ENCODE measurements at regions of chr1 and their contacts with region 1.

Region 1: DNA sequence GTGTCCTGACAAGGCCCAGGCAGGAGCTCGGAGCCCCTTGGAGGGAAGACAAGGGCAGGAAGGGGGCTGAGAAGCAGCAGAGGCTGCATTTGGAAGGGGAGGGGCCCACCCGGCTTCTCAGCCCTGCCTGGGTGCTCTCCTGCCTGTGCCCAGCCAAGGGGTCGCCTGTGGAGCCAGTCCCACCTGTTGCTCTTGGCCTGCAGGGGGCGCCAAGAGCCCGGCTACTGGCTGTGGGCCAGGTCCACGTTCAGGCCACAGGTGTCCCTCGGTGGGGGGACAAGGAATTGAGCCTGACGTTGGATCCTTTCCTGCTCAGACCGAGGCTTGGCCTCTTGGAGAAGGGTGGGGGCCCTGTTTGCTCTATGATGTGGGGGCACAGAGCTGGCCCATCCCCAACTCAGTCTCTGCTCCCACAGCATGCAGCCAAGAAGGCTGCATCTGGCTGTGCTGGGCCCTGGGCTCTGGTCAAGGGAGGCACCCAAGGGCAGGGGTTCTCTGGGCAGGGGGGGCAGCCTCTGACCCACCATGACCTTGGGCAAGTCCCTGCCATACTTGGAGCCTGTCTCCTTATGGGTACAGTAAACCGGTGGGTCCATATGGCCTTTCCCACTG is 10.9 kb downstream of the WNT4 start:
- DNase-seq: peak in 8 of 9 experiments; percentile 30 to 72 (median 58)
- ATAC-seq: peak; percentile 38
- H3K4me3 ChIP-seq: no peak overlapping the region
- H3K4me3 Mint-ChIP-seq: no peak overlapping the region
- H3K27ac ChIP-seq: no peak overlapping the region
- H3K27ac Mint-ChIP-seq: no peak overlapping the region
- H3K4me1 ChIP-seq: no peaks in the 10 kb centered on the region
- H3K4me1 Mint-ChIP-seq: no peaks in the 10 kb centered on the region
- H3K27me3 ChIP-seq: no peaks in the 10 kb centered on the region
- H3K27me3 Mint-ChIP-seq: peaks cover 2% of the 10 kb centered on the region
- CTCF ChIP-seq: peak; percentile 52

Region 2: DNA sequence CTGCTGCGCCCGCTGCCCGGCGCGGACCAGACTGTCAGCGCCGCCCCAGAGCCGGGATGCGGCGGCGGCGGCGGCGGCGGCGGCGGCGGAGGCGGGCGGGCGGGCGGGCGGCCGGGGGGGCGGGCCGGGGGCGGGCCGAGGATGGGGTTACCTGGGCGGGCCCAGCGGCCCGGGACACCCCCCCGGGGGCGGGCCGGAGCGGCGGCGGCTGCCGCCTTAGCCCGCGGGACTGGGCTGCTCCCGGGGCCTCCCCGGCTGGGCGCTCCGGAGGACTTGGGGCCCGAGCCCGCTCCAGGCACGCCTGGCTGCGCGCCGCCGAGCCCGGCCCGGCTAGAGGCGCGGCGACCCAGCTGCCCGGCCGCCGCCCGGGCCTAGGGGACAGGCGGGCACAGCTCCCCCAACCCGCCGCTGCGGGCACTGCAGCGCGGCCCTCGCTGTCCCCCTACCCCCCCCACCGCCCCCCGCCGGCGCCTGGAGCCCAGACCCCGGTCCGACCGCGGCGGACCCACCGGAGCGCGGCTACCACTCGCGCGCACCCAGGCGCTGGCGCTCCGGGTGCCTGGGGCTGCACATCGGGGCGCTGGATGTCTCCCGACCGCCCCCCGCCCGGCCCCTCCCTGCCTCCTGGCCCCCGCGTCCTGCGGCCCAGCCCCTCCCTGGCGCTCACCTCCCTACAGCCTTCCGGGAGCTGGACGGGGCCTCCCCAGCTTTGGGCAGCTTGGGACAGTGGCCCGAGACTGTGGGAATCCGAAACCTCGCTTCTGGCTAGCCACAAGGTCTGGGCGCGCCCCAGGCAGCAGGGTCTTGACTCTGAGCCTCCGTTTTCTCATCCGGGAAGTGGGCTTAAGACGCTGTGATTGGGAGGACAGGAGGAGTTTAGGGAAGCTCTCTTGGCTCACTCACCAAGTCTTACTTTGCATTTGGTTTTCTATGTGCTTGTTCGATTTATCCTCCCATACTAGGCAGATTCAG is 11.4 kb after region 1 on chr1 and contains the start of gene WNT4:
- CTCF ChIA-PET with region 1: interaction called, 12 read pairs
- POLR2A ChIA-PET with region 1: no interaction called
- intact Hi-C with region 1: no loop called
- DNase-seq: peak in 4 of 9 experiments; percentile 4 to 60 (median 45)
- ATAC-seq: peak; percentile 79
- H3K4me3 ChIP-seq: peak within 1 kb of the TSS in 1 of 2 experiments; percentile 30
- H3K4me3 Mint-ChIP-seq: peak within 1 kb of the TSS; percentile 78
- H3K27ac ChIP-seq: no peak within 1 kb of the TSS
- H3K27ac Mint-ChIP-seq: no peak within 1 kb of the TSS
- H3K4me1 ChIP-seq: peaks cover 7% of the 10 kb centered on the region
- H3K4me1 Mint-ChIP-seq: peaks cover 8% of the 10 kb centered on the region
- H3K27me3 ChIP-seq: peaks cover 14 to 23% of the 10 kb centered on the region in 2 experiments
- H3K27me3 Mint-ChIP-seq: peaks cover 56% of the 10 kb centered on the region
- CTCF ChIP-seq: no peak
- total RNA-seq, gene WNT4: not detected

Region 3: GRCh38 chr1:22259551-22260282 is 127.7 kb after region 1 on chr1:
- CTCF ChIA-PET with region 1: no interaction called
- POLR2A ChIA-PET with region 1: no interaction called
- intact Hi-C with region 1: no loop called
- DNase-seq: no peak
- ATAC-seq: no peak
- H3K4me3 ChIP-seq: no peak overlapping the region
- H3K4me3 Mint-ChIP-seq: no peak overlapping the region
- H3K27ac ChIP-seq: no peak overlapping the region
- H3K27ac Mint-ChIP-seq: no peak overlapping the region
- H3K4me1 ChIP-seq: no peaks in the 10 kb centered on the region
- H3K4me1 Mint-ChIP-seq: no peaks in the 10 kb centered on the region
- H3K27me3 ChIP-seq: no peaks in the 10 kb centered on the region
- H3K27me3 Mint-ChIP-seq: peaks cover 20% of the 10 kb centered on the region
- CTCF ChIP-seq: no peak

Region 4: DNA sequence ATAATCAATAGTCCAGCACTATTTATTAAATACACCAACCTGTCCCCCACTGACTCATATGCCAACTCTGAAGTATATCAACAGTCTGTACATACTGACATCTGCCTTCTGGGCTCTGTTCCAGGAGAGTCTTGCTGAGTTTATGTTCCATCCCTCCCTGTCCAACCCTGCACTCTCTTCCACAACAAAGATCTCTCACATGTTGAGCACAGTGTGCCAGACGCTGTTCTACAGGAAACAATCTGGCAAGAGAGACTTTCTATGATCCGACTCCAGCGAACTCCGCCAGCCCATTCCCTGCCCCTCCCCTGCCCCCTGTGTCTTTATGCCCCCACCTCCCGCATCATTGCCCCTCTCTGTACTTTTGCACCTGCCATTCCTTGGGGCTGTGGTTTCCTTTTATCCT is 837.3 kb after region 1 on chr1:
- CTCF ChIA-PET with region 1: no interaction called
- POLR2A ChIA-PET with region 1: no interaction called
- intact Hi-C with region 1: loop called in 1 of 2 experiments (anchors 10 kb)
- DNase-seq: no peak
- ATAC-seq: no peak
- H3K4me3 ChIP-seq: no peak overlapping the region
- H3K4me3 Mint-ChIP-seq: no peak overlapping the region
- H3K27ac ChIP-seq: no peak overlapping the region
- H3K27ac Mint-ChIP-seq: no peak overlapping the region
- H3K4me1 ChIP-seq: no peaks in the 10 kb centered on the region
- H3K4me1 Mint-ChIP-seq: no peaks in the 10 kb centered on the region
- H3K27me3 ChIP-seq: no peaks in the 10 kb centered on the region
- H3K27me3 Mint-ChIP-seq: peaks cover 45% of the 10 kb centered on the region
- CTCF ChIP-seq: no peak

Measured in CD8-positive, alpha-beta T cell (primary cell).